Motor neuron (in vitro differentiated cells): ENCODE measurements at regions of chr5 and their contacts with region 1.

Region 1: DNA sequence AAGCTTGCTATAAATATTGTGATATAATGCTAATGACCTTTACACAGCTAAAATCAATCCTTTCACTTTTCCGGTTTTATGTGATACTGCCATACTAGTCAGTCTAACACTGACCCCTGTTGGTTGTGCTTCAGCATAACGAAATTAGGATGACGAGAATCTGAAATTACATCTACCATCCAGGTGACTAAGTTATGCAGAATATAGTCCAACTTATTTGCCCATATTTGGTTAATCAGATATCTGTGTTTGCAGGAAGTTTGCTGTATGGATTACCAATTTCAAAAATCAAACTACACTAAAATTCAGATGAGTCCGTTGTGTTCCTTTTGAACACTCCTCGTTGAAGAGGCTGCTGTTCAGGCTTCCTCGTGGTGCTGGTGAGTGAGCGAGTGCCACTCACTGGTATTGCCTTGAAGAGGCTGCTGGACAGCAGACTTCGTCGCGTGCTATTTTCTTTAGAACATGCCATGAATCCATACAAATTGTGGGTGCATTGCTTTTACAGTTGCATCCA is 32.5 kb downstream of the TENT4A start:
- ATAC-seq: peak; percentile 43 to 96 (median 66)
- H3K4me3 ChIP-seq: no peak overlapping the region
- H3K27ac ChIP-seq: no peak overlapping the region
- H3K4me1 ChIP-seq: peaks cover 3 to 8% of the 10 kb centered on the region in 2 donors

Region 2: GRCh38 chr5:6632917-6633468 is 112.8 kb before region 1 on chr5 and contains the starts of genes NSUN2 and SRD5A1:
- in situ Hi-C with region 1: loop called in 3 of 9 experiments (anchors 10 to 25 kb)
- ATAC-seq: peak; percentile 82 to 90 (median 89)
- H3K4me3 ChIP-seq: peak within 1 kb of the TSS; percentile 50 to 86 (median 70)
- H3K27ac ChIP-seq: peak within 1 kb of the TSS; percentile 99 to 100
- H3K4me1 ChIP-seq: peaks cover 6 to 14% of the 10 kb centered on the region in 2 donors
- total RNA-seq, gene NSUN2: 20.6 to 86.7 (median 35.2) TPM
- total RNA-seq, gene SRD5A1: 6.4 to 28.6 (median 15.0) TPM